Activated naive CD4-positive, alpha-beta T cell treated with anti-CD3 and anti-CD28 coated beads for 36 hours (primary cell): ENCODE measurements at regions of chrX and their contacts with region 1.

Region 1: DNA sequence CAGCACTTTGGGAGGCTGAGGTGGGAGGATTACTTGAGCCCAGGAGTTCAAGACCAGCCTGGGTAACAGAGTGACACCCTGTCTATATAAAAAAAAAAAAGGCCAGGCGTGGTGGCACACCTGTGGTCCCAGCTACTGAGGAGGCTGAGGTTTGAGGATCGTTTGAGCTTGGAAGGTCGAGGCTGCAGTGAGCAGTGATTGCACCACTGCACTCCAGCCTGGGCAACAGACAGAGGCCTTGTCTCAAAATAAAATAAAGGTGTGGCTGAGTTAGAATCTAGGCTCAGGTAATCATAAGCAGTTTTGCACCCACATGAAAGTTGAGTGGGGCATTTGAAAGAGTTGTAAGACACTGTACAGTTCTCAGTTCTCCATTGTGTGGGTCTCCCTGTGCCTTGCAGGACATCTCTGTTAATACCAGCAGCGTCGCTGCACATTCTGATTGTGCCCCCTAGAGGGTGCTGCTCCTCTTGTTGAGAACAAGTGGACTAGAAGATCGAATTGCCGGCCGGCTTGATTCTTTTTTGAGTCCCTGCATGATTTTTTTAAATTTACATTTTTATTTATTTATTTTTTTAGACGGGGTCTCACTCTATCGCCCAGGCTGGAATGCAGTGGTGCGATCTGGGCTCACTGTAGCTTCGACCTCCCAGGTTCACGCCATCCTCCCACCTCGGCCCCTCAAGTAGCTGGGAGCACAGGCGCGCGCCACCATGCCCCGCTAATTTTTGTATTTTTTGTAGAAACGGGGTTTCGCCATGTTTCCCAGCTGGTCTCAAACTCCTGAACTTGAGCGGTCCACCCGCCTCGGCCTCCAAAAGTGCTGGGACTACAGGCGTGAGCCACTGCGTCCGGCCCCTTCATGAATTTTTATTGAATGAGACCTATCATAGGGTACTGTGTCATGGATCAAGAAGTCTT is 73.6 kb upstream of the RBMX start:
- DNase-seq: peak; percentile 79
- H3K4me3 Mint-ChIP-seq: no peak overlapping the region
- H3K27ac Mint-ChIP-seq: no peak overlapping the region
- H3K4me1 Mint-ChIP-seq: no peaks in the 10 kb centered on the region
- H3K27me3 Mint-ChIP-seq: no peaks in the 10 kb centered on the region

Region 2: DNA sequence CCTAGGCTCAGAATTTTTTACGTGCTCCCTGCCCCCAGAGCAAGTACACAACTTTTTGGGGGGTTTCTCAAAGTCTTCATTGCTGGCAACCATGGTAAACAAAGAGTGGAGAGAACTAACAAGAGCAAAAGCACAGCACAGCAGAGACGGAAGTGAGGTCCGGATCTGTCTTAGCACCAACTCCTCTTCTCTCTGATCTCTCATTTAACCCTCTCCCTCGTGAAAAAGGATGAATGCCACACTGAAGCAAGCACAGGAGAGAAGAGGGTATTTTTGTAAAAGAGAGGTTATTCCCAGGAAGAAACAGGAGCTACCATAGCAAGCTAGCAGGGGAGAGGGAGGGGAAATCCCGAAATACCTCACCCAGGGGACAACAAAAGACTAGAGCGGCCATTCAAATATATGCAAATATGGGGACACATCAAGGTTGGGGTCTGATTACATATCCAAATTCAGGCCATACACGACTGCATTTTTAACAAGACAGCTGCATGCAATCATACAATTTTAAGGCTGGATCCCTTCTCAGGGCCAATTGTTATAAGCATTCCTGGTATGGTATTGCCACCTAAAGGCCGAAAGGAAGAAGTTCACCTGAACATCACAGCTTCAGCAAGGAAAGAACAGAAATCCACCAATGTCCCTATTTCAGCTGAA is 259.6 kb before region 1 on chrX:
- CTCF ChIA-PET with region 1: no interaction called
- intact Hi-C with region 1: no loop called
- DNase-seq: peak; percentile 45
- H3K4me3 Mint-ChIP-seq: peak overlapping the region; percentile 76
- H3K27ac Mint-ChIP-seq: peak overlapping the region; percentile 99
- H3K4me1 Mint-ChIP-seq: peaks cover 73% of the 10 kb centered on the region
- H3K27me3 Mint-ChIP-seq: no peaks in the 10 kb centered on the region

Region 3: DNA sequence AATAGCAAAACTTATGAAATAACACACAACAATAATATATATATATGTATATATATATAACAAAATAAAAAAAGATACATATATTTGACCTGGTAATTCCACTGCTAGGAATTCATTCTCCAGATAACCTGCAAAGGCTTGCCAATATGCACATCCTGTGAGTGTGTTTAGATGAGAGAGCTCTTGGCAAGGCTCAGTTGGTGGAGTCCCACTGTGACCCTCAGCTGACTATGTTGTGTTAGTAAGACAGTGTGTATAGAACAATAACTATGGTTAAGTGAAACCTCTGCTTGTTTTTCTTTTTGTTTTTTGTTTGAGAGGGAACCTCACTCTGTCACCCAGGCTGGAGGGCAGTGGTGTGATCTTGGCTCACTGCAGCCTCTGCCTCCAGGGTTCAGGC is 34.1 kb before region 1 on chrX:
- CTCF ChIA-PET with region 1: no interaction called
- intact Hi-C with region 1: no loop called
- DNase-seq: no peak
- H3K4me3 Mint-ChIP-seq: no peak overlapping the region
- H3K27ac Mint-ChIP-seq: no peak overlapping the region
- H3K4me1 Mint-ChIP-seq: peaks cover 2% of the 10 kb centered on the region
- H3K27me3 Mint-ChIP-seq: no peaks in the 10 kb centered on the region

Region 4: GRCh38 chrX:137031517-137032340 is 77.6 kb after region 1 on chrX:
- CTCF ChIA-PET with region 1: interaction called, 3 read pairs
- intact Hi-C with region 1: loop called (anchors 1 kb)
- DNase-seq: peak; percentile 62
- H3K4me3 Mint-ChIP-seq: no peak overlapping the region
- H3K27ac Mint-ChIP-seq: no peak overlapping the region
- H3K4me1 Mint-ChIP-seq: peaks cover 7% of the 10 kb centered on the region
- H3K27me3 Mint-ChIP-seq: peaks cover 42% of the 10 kb centered on the region

Region 5: GRCh38 chrX:137058339-137059127 is 104.4 kb after region 1 on chrX:
- CTCF ChIA-PET with region 1: no interaction called
- intact Hi-C with region 1: no loop called
- DNase-seq: no peak
- H3K4me3 Mint-ChIP-seq: no peak overlapping the region
- H3K27ac Mint-ChIP-seq: no peak overlapping the region
- H3K4me1 Mint-ChIP-seq: no peaks in the 10 kb centered on the region
- H3K27me3 Mint-ChIP-seq: peaks cover 9% of the 10 kb centered on the region

Region 6: GRCh38 chrX:137194164-137194563 is 240.0 kb after region 1 on chrX:
- CTCF ChIA-PET with region 1: no interaction called
- intact Hi-C with region 1: loop called (anchors 1 kb)
- DNase-seq: peak; percentile 36
- H3K4me3 Mint-ChIP-seq: no peak overlapping the region
- H3K27ac Mint-ChIP-seq: no peak overlapping the region
- H3K4me1 Mint-ChIP-seq: peaks cover 2% of the 10 kb centered on the region
- H3K27me3 Mint-ChIP-seq: no peaks in the 10 kb centered on the region

Region 7: DNA sequence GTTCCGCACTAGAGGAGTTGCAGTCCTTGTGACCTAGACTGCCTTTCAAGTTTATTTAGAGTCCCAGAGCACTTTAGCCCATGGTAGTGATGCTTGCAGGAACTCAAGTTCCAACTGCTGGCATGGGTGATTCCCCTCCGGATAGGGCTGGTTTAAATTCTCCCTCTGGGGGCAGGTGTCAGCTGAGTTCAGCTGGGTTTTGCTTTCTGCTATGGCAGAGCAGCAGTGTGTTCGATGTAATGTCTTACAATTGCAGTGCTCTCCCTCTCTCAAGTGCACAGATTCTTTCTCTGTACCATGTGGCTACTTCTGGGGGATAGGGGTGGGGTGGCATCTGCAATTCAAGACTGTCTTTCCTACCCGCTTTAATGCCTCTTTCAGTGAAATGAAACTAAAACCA is 447.0 kb after region 1 on chrX:
- CTCF ChIA-PET with region 1: no interaction called
- intact Hi-C with region 1: no loop called
- DNase-seq: no peak
- H3K4me3 Mint-ChIP-seq: no peak overlapping the region
- H3K27ac Mint-ChIP-seq: no peak overlapping the region
- H3K4me1 Mint-ChIP-seq: no peaks in the 10 kb centered on the region
- H3K27me3 Mint-ChIP-seq: peaks cover 3% of the 10 kb centered on the region

Region 8: DNA sequence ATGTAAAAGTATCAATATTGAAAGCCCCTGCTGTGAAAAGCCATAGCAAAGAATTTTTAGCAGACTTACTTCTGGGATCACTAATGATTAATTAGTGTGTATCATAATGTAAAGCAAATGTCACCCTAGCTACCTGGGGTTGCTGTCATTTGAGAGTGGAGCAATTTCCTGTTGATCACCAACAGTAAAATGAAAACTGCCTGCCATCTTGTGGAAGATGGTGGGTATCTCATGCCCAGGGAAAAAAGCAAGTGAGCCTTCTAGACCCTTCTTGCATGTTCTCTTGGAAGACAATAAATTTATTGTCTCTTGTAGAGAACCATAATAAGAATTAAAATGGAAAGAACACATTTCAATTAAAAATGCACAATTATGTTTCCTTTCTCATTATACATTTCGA is 972.0 kb after region 1 on chrX:
- CTCF ChIA-PET with region 1: no interaction called
- intact Hi-C with region 1: loop called (anchors 5 kb)
- DNase-seq: no peak
- H3K4me3 Mint-ChIP-seq: no peak overlapping the region
- H3K27ac Mint-ChIP-seq: no peak overlapping the region
- H3K4me1 Mint-ChIP-seq: no peaks in the 10 kb centered on the region
- H3K27me3 Mint-ChIP-seq: no peaks in the 10 kb centered on the region